ENCODE measurements at regions of chr16 and their contacts with region 1.

Region 1: DNA sequence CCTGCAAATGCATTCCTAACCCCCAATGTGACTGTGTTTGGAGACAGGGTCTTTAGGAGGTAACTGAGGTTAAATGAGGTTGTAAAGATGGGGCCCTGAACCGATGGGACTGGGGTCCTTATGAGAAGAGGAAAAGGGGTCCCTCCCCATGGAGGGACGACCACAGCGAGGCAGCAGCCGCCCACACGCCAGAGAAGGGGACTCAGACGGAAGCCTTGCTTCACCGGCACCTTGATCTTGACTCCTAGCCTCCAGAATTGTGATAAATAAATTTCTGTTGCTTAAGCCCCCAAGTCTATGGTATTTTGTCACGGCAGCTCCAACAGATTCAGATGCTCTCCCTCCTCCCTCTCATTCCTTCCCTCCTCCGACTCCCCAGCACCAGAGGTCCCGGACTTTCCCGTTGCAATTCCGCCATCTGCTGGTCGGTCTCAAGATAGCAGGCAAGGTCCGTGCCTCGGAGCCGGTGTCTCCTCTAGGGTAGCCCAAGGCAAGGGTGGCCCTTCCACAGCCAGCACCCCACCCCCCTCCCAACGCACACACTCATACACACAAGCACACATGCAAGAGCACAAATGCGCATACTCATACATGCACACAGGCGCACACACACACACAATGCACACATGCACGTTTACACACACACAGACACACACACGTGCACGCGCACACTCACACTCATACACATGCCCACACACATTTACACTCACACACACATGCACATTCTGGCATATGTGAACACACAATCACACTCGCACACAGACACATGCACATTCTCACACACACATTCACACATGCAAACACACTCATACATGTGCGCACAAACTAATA is 23.1 kb upstream of the C16orf78 start:
- DNase-seq: peak; percentile 71
- H3K4me3 ChIP-seq: no peak overlapping the region
- H3K27ac ChIP-seq: no peak overlapping the region
- H3K4me1 ChIP-seq: no peaks in the 10 kb centered on the region
- H3K27me3 ChIP-seq: peaks cover 19% of the 10 kb centered on the region
- CTCF ChIP-seq: peak; percentile 74 to 87 (median 81)
- EP300 ChIP-seq: no peak
- POLR2A ChIP-seq: no peak

Region 2: GRCh38 chr16:48687421-48688038 is 663.0 kb before region 1 on chr16:
- in situ Hi-C with region 1: loop called in 3 of 4 experiments (anchors 5 to 10 kb)
- intact Hi-C with region 1: loop called (anchors 5 kb)
- DNase-seq: peak; percentile 18
- H3K4me3 ChIP-seq: no peak overlapping the region
- H3K27ac ChIP-seq: no peak overlapping the region
- H3K4me1 ChIP-seq: no peaks in the 10 kb centered on the region
- H3K27me3 ChIP-seq: no peaks in the 10 kb centered on the region
- CTCF ChIP-seq: peak; percentile 57 to 72 (median 66)
- EP300 ChIP-seq: no peak
- POLR2A ChIP-seq: no peak